Activated CD8-positive, alpha-beta T cell treated with anti-CD3 and anti-CD28 coated beads, Interleukin-2, amount 10 ng/mL, durations not matched to agents 7 days and 5 days (primary cell): ENCODE measurements at regions of chr17 and their contacts with region 1.

Region 1: GRCh38 chr17:47889734-47890529 is 6.1 kb upstream of the SP2 start:
- DNase-seq: peak; percentile 94
- ATAC-seq: peak; percentile 97
- H3K4me3 Mint-ChIP-seq: no peak overlapping the region
- H3K27ac Mint-ChIP-seq: peak overlapping the region; percentile 39
- H3K4me1 Mint-ChIP-seq: peaks cover 33% of the 10 kb centered on the region
- H3K27me3 Mint-ChIP-seq: no peaks in the 10 kb centered on the region

Region 2: GRCh38 chr17:47742319-47743181 is 147.4 kb before region 1 on chr17:
- CTCF ChIA-PET with region 1: no interaction called
- POLR2A ChIA-PET with region 1: no interaction called
- DNase-seq: peak; percentile 51
- ATAC-seq: peak; percentile 59
- H3K4me3 Mint-ChIP-seq: no peak overlapping the region
- H3K27ac Mint-ChIP-seq: peak overlapping the region; percentile 60
- H3K4me1 Mint-ChIP-seq: peaks cover 62% of the 10 kb centered on the region
- H3K27me3 Mint-ChIP-seq: no peaks in the 10 kb centered on the region

Region 3: GRCh38 chr17:47831003-47831933 is 58.7 kb before region 1 on chr17 and contains the starts of genes LRRC46 and MRPL10:
- CTCF ChIA-PET with region 1: interaction called, 27 read pairs
- POLR2A ChIA-PET with region 1: interaction called, 25 read pairs
- DNase-seq: peak; percentile 95
- ATAC-seq: peak; percentile 90
- H3K4me3 Mint-ChIP-seq: peak within 1 kb of the TSS; percentile 84
- H3K27ac Mint-ChIP-seq: peak within 1 kb of the TSS; percentile 92
- H3K4me1 Mint-ChIP-seq: peaks cover 50% of the 10 kb centered on the region
- H3K27me3 Mint-ChIP-seq: no peaks in the 10 kb centered on the region
- total RNA-seq, gene LRRC46: 0.82 to 0.97 TPM
- total RNA-seq, gene MRPL10: 37.9 to 41.6 TPM

Region 4: GRCh38 chr17:47840740-47841603 is 49.0 kb before region 1 on chr17 and contains the start of gene SCRN2:
- CTCF ChIA-PET with region 1: interaction called, 538 read pairs
- POLR2A ChIA-PET with region 1: interaction called, 19 read pairs
- DNase-seq: peak; percentile 91
- ATAC-seq: peak; percentile 92
- H3K4me3 Mint-ChIP-seq: peak within 1 kb of the TSS; percentile 99
- H3K27ac Mint-ChIP-seq: peak within 1 kb of the TSS; percentile 95
- H3K4me1 Mint-ChIP-seq: peaks cover 30% of the 10 kb centered on the region
- H3K27me3 Mint-ChIP-seq: peaks cover 16% of the 10 kb centered on the region
- total RNA-seq, gene SCRN2: 24.1 to 24.8 TPM

Region 5: DNA sequence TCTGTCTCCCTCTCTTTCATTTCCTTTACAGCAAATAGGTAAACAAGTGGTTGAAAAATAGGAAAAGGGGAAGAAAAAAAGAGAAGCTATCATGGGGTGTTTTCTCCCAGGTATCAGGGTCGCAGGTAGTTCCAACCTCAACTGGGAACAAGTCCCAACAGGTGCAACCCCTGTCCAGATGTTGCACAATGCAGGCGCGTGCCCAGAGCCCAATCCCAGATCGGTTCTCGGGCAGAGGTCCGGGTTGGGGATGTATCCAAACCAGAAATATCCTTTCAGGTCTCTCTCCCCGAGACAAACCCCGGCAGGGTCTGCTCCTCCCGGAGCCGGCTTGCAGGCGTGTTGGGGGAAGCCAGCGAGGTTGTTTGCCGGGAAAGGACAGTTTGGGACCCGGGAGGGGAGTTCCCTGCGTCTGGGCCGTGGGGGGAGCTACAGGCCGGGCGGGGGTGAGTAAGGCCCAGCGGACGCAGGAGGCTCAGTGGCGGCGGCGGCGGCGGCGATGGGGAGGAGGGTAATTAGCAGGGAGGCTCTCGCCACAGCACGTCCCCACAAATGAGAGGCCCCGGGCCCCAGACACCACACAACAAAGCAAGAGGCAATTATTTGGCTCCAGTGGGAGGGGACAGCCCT is 17.8 kb before region 1 on chr17:
- CTCF ChIA-PET with region 1: interaction called, 20 read pairs
- POLR2A ChIA-PET with region 1: interaction called, 8 read pairs
- DNase-seq: no peak
- ATAC-seq: no peak
- H3K4me3 Mint-ChIP-seq: no peak overlapping the region
- H3K27ac Mint-ChIP-seq: no peak overlapping the region
- H3K4me1 Mint-ChIP-seq: no peaks in the 10 kb centered on the region
- H3K27me3 Mint-ChIP-seq: peaks cover 39% of the 10 kb centered on the region

Region 6: DNA sequence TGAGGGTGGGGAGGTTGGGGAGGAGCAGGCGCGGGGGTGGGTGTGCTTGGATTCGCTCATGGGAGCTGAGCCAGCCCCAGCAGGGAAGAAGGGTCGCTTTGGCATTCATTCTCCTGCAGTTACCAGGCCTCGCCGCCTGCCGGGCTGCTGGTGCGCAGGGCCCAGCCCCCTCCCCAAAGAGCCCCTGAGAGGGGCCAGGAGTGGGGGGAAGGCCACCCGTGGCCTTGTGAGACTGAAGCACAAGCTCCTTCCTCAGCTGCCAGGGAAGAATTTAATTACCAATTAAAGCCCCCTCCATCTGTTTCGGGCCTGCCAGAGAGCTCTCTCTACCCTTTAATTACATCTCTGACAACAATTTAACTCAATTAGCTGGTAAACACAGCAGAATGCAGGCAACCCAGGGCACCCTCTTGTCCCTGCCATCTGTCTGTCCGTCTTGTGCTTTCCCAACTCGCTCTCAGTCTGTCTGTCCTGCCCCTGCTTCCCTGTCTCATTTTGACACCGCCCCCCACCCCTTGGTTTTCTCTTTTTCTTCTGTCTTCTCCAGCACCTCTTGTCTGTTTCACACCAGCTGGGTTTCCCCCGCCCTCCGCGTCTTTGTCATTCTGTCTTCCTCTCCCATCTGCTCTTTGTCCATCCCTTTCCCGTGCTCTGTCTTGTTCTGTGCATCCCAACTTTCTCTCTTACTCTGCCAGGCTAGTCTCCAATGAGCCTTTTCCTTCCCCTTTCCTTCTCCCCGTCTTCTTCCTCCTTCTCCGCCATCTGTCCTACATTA is 113.7 kb after region 1 on chr17:
- CTCF ChIA-PET with region 1: no interaction called
- POLR2A ChIA-PET with region 1: no interaction called
- DNase-seq: no peak
- ATAC-seq: no peak
- H3K4me3 Mint-ChIP-seq: no peak overlapping the region
- H3K27ac Mint-ChIP-seq: no peak overlapping the region
- H3K4me1 Mint-ChIP-seq: peaks cover 15% of the 10 kb centered on the region
- H3K27me3 Mint-ChIP-seq: peaks cover 36% of the 10 kb centered on the region

Region 7: DNA sequence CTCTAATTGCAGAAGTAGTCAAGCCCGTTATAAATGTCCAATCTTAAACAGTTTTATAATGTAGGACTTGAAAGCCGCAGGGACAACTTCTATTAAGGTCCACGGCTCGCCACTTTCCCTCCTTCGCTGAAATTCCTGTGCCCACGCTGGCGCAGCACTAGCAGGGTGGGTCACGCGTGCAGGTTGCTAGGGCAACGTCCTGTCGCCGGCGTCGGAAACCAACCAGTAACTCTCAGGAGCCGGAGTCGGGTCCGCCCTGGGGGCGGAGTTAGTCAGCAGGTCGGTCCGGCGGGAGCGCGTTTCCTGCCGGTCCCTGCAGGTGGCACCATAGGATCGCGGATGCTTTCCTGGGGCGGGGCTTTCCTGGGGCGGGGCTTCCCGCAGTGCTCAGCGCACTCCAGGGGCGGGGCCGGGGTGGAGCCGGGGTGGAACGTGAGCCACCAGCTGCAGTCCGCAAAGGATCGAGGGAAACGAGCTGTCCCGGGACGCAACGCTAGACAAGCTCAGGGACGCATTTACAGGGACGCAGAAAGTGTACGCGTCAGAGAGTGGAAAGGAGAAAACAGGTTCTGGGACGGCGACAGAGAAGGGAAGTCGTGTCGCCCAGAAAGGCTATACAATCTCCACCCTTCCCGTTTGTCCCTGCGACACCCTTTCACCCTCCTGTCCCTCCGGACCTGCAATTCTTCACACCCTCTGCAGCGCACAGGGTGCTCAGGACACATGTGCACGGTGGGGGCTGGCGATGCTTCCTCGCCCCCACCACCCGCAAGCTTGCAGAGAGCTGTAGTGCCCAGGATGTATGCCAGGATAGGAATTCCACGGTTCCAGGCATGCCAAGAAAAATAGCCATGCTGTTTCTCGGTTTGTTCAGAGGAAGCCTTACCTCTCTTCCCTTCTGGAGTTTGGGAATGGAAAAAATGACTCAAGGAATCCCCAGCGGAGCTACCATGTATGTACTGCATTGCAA is 135.3 kb after region 1 on chr17:
- CTCF ChIA-PET with region 1: no interaction called
- POLR2A ChIA-PET with region 1: no interaction called
- DNase-seq: peak; percentile 98
- ATAC-seq: peak; percentile 92
- H3K4me3 Mint-ChIP-seq: peak overlapping the region; percentile 80
- H3K27ac Mint-ChIP-seq: peak overlapping the region; percentile 71
- H3K4me1 Mint-ChIP-seq: peaks cover 33% of the 10 kb centered on the region
- H3K27me3 Mint-ChIP-seq: peaks cover 17% of the 10 kb centered on the region